ENCODE measurements at regions of chr10 and their contacts with region 1.

Region 1: GRCh38 chr10:29377333-29377961 is 88.6 kb downstream of the LYZL1 start:
- DNase-seq: peak; percentile 60
- H3K4me3 Mint-ChIP-seq: no peak overlapping the region
- H3K27ac Mint-ChIP-seq: no peak overlapping the region
- H3K4me1 Mint-ChIP-seq: peaks cover 6% of the 10 kb centered on the region
- H3K27me3 Mint-ChIP-seq: peaks cover 9% of the 10 kb centered on the region

Region 2: GRCh38 chr10:28951484-28951883 is 426.0 kb before region 1 on chr10:
- intact Hi-C with region 1: no loop called
- DNase-seq: no peak
- H3K4me3 Mint-ChIP-seq: no peak overlapping the region
- H3K27ac Mint-ChIP-seq: no peak overlapping the region
- H3K4me1 Mint-ChIP-seq: no peaks in the 10 kb centered on the region
- H3K27me3 Mint-ChIP-seq: peaks cover 7% of the 10 kb centered on the region

Region 3: DNA sequence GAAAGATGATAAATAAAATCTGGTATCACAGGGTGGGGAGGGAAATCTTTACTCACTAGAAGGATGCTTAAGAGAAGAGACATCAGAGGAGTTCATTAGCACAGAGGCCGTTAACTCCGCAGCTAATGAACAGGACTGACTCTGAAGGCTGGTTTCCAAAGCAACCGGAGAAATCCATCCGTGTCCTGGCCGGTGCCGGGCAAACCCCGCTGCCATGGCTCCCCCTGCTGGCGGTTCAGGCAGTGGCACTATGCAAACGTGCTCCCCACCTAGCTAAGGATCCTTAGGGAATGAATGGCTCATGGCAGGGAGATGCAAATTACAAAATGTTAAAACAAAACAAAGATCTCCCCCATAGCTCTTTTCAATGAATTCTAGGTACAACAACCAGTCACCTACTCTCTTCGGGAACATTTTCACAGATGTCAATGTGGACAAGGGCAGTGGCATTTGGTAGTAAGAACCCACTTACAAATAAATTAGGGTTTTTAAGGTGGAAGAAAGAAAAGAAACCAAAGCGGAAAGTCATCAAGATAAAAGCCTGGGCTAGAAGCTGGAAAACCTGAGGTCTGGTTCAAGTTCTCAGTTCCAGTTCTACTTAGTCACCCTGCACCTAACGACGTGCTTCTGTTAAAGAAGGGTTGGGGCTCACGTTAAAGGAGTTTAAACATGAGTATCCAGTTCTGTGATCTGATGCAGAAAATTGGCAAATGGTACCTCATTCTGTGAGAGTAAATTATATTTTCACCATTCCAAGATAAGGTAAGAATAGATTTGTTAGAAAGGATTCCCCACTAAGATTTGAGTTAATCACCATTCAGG is 119.1 kb after region 1 on chr10:
- intact Hi-C with region 1: loop called (anchors 5 kb)
- DNase-seq: peak; percentile 89
- H3K4me3 Mint-ChIP-seq: no peak overlapping the region
- H3K27ac Mint-ChIP-seq: no peak overlapping the region
- H3K4me1 Mint-ChIP-seq: peaks cover 1% of the 10 kb centered on the region
- H3K27me3 Mint-ChIP-seq: no peaks in the 10 kb centered on the region

Region 4: DNA sequence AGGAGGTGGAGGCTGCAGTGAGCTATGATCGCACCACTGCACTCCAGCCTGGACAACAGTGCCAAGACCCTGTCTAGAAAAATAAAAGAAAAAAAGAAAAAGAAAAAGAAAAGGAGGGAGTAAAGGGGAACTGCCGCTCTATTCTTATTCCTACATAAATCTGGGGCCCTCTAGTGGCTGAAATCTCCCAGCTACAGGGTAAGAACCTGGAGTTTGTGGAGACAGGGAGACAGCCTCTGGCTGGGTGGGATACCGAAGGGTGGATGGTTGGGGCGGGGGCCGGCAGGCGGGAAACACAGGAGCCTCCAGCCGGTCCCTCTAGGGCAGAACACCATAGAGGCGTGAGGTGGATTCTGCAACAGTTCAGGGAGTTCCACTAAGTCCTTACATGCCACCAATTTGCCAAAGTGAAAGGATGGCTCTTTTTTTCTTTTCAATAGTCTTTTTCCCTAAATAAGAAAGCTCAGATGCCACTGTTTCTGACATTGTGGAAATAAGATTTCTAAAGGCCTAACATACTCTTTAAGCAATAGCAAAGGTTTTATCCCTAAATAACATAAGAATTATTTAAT is 140.0 kb after region 1 on chr10:
- intact Hi-C with region 1: loop called (anchors 5 kb)
- DNase-seq: no peak
- H3K4me3 Mint-ChIP-seq: no peak overlapping the region
- H3K27ac Mint-ChIP-seq: no peak overlapping the region
- H3K4me1 Mint-ChIP-seq: peaks cover 2% of the 10 kb centered on the region
- H3K27me3 Mint-ChIP-seq: no peaks in the 10 kb centered on the region

Measured in activated CD4-positive, alpha-beta T cell treated with anti-CD3 and anti-CD28 coated beads, Interleukin-2, amount 10 ng/mL, durations not matched to agents 24 days and 14 days (primary cell).